Dorsolateral prefrontal cortex (tissue), 120 donors: ENCODE measurements at regions of chr19 and their contacts with region 1.

Region 1: DNA sequence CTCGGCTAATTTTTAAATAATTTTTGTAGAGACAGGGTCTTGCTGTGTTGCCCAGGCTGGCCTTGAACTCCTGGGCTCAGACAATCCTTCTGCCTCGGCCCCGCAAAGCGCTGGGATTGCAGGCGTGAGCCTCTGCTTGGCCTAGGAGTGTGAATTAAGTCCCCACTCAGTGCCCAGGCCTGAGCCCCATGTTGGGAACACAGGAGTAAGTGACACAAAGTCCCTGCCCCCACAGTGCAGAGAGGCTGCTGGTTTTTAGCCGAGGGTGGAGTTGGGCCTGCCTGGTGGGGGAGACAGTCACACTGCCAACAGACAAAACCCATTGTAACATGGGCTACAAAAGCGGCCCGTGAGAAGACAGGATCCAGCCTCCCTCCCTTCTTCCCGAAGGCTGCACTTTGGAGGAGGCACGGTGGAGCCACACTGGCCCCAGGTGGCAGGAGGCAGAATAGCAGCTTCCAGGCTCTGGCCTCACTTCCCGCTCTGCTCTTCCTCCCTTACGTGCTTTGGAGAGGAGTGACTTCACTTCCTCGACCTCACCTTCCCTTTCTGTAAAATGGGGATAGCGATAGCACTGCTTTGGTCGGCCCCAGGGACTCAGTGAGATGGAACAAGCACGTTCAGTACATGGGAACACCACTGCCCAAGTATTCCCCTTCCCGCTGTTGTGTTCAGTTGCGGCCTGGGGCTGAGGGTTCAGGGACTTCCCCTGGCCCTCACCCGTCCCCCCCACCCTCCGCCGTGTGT is 15.2 kb upstream of the EHD2 start:
- DNase-seq: peak; percentile 74 to 89 (median 86)
- H3K4me3 ChIP-seq: peak overlapping the region in 5 of 59 donors; percentile 3 to 30 (median 11)
- H3K27ac ChIP-seq: peak overlapping the region in 58 of 59 donors; percentile 11 to 95 (median 85)
- H3K27me3 ChIP-seq: no peaks in the 10 kb centered on the region
- CTCF ChIP-seq: peak; percentile 80 to 99 (median 97)

Region 2: DNA sequence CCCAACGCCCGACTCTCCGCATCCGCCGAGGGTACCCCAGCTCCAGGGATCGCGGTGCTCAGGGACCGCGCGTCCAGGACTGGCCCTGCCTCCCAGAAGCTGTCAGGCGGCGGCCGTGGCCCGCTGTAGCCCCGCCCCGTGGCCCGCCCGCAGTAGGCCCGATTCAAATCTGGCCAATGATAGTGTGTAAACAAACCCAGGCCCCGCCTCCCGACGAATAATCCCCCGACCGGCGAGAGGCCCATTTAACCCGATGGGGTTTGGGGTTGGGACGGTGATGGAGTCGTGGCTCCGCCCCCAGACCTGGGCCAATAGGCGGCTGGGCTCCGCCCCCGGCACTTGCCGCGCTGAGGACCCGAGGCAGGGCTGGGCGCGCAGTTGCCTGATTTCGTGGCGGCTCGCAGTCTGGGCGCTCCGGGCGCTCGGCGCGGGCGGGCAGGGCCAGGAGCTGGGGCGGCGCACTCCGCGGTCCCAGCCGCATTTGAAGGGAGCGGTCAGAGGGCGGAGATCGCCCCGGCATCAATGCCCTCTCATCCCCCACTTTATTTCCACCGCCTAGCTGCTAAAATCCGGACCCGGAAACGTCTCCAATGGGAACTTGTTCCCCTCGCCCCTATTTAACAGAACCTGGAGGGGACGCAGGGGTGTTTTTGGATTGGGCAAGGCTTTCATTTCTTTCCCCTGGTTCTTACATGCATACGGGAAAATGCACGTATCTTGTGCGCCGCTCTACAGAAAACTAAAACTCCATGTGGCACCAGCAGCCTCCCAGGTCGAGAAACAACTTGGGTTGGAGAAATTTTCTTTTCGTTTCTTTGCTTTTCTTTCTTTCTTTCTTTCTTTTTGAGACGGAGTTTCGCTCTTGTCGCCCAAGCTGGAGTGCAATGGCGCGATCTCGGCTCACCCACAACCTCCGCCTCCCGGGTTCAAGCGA is 97.5 kb before region 1 on chr19:
- intact Hi-C with region 1: loop called in 1 of 2 experiments (anchors 5 kb)
- DNase-seq: peak; percentile 98 to 100 (median 100)
- H3K4me3 ChIP-seq: peak overlapping the region; percentile 47 to 89 (median 73)
- H3K27ac ChIP-seq: peak overlapping the region; percentile 41 to 94 (median 83)
- H3K27me3 ChIP-seq: no peaks in the 10 kb centered on the region
- CTCF ChIP-seq: peak in 34 of 56 donors; percentile 4 to 63 (median 28)

Region 3: GRCh38 chr19:47608074-47608918 is 89.7 kb before region 1 on chr19:
- intact Hi-C with region 1: loop called (anchors 2 to 5 kb)
- DNase-seq: peak; percentile 76 to 98 (median 91)
- H3K4me3 ChIP-seq: peak overlapping the region; percentile 73 to 100 (median 98)
- H3K27ac ChIP-seq: peak overlapping the region; percentile 77 to 99 (median 95)
- H3K27me3 ChIP-seq: no peaks in the 10 kb centered on the region
- CTCF ChIP-seq: peak in 12 of 56 donors; percentile 1 to 20 (median 14)

Region 4: DNA sequence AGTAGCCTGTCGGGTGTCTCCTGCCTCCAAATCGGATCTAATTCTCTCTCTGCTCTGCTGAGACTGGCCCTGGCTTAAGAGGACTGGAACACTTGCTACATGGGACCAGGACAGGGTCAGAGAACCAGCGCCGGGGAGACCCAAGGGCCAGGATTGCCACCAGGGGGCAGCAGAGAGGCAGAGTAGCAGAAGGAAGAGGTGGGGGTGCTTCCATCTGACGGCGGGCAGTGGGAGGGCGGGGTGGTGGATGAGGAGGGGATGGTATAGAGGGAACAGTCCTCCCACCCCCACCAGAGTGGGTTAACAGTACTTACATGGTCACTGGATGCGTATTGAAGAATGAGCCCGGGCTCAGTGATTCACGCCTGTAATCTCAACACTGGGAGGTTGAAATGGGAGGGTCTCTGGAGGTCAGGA is 92.4 kb after region 1 on chr19:
- intact Hi-C with region 1: loop called in 1 of 2 experiments (anchors 5 kb)
- DNase-seq: peak; percentile 70 to 86 (median 78)
- H3K4me3 ChIP-seq: no peak overlapping the region
- H3K27ac ChIP-seq: no peak overlapping the region
- H3K27me3 ChIP-seq: no peaks in the 10 kb centered on the region
- CTCF ChIP-seq: peak; percentile 51 to 86 (median 74)